Activated CD4-positive, alpha-beta memory T cell treated with anti-CD3 and anti-CD28 coated beads for 36 hours (primary cell): ENCODE measurements at regions of chr2 and their contacts with region 1.

Region 1: GRCh38 chr2:69643602-69644505 is at the start of gene AAK1:
- DNase-seq: peak; percentile 91
- H3K4me3 Mint-ChIP-seq: peak within 1 kb of the TSS; percentile 86
- H3K27ac Mint-ChIP-seq: peak within 1 kb of the TSS; percentile 99
- H3K4me1 Mint-ChIP-seq: peaks cover 52% of the 10 kb centered on the region
- H3K27me3 Mint-ChIP-seq: no peaks in the 10 kb centered on the region
- total RNA-seq, gene AAK1: 95.2 to 99.3 TPM

Region 2: GRCh38 chr2:69436938-69437750 is 206.7 kb before region 1 on chr2 and contains the start of gene NFU1:
- CTCF ChIA-PET with region 1: no interaction called
- POLR2A ChIA-PET with region 1: interaction called, 11 read pairs
- intact Hi-C with region 1: loop called (anchors 1 kb)
- DNase-seq: peak; percentile 94
- H3K4me3 Mint-ChIP-seq: peak within 1 kb of the TSS; percentile 95
- H3K27ac Mint-ChIP-seq: peak within 1 kb of the TSS; percentile 91
- H3K4me1 Mint-ChIP-seq: peaks cover 24% of the 10 kb centered on the region
- H3K27me3 Mint-ChIP-seq: no peaks in the 10 kb centered on the region
- total RNA-seq, gene NFU1: 37.8 to 44.5 TPM

Region 3: DNA sequence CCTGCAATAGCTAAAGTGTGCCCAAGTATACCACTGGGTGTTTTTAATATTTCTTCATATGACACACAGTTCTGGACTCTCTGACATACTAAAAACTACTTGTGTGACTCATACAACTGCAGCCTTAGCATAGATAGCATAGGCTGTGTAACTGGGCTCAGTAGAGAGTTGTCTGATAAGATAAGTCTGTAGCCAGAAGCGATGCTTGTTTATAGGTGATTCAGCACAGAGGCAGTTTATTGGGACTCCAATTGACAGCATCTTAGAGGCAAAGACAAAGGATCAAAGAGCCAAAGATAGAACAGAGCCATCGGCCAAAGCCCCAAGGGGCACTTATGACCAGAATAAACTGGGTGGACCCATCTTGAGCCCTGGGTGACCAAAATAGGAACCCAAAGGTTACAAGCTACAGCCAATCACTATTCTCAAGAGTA is 42.7 kb before region 1 on chr2:
- CTCF ChIA-PET with region 1: interaction called, 3 read pairs
- POLR2A ChIA-PET with region 1: interaction called, 5 read pairs
- intact Hi-C with region 1: loop called (anchors 1 kb)
- DNase-seq: no peak
- H3K4me3 Mint-ChIP-seq: no peak overlapping the region
- H3K27ac Mint-ChIP-seq: peak overlapping the region; percentile 85
- H3K4me1 Mint-ChIP-seq: peaks cover 88% of the 10 kb centered on the region
- H3K27me3 Mint-ChIP-seq: no peaks in the 10 kb centered on the region

Region 4: DNA sequence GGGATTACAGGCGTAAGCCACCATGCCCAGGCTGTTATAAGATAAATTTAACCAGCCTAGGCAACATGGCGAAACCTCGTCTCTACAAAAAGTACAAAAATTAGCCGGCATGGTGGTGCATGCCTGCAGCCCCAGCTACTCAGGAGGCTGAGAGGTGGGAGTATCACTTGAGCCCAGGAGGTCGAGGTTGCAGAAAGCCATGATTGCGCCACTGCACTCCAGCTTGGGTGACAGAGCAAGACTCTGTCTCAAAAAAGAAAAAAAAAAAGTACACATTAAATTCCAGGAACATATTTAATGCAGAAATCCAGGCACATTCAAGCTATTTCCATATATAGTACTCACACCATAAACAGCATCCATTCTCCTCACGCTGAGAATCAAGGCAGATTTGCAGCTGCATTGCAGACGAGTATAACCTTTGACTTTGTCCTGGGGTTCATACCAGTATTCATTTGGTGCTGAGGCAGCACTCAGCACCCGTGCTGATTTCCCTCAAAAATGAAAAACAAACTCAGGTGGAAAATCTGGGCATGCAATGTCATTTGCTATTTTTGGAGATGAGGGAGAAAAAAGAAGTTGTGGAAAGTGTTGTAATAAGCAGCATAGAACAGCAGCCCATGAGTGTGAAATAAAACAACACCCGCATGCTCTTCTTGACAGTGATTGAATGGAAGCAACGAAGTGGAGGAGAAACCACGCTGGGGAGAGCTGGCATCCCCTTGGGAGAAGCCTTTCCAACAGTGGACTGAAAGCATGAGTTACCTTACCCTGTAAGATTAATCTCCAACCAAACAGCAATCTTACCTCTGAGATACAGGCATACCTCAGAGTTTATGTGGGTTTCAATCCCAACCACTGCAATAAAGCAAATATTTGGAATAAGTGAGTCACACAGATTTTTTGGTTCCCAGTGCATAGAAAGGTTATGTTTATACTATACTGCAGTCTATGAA is 51.3 kb after region 1 on chr2:
- CTCF ChIA-PET with region 1: no interaction called
- POLR2A ChIA-PET with region 1: interaction called, 3 read pairs
- intact Hi-C with region 1: loop called (anchors 1 kb)
- DNase-seq: no peak
- H3K4me3 Mint-ChIP-seq: no peak overlapping the region
- H3K27ac Mint-ChIP-seq: peak overlapping the region; percentile 47
- H3K4me1 Mint-ChIP-seq: peaks cover 78% of the 10 kb centered on the region
- H3K27me3 Mint-ChIP-seq: no peaks in the 10 kb centered on the region

Region 5: DNA sequence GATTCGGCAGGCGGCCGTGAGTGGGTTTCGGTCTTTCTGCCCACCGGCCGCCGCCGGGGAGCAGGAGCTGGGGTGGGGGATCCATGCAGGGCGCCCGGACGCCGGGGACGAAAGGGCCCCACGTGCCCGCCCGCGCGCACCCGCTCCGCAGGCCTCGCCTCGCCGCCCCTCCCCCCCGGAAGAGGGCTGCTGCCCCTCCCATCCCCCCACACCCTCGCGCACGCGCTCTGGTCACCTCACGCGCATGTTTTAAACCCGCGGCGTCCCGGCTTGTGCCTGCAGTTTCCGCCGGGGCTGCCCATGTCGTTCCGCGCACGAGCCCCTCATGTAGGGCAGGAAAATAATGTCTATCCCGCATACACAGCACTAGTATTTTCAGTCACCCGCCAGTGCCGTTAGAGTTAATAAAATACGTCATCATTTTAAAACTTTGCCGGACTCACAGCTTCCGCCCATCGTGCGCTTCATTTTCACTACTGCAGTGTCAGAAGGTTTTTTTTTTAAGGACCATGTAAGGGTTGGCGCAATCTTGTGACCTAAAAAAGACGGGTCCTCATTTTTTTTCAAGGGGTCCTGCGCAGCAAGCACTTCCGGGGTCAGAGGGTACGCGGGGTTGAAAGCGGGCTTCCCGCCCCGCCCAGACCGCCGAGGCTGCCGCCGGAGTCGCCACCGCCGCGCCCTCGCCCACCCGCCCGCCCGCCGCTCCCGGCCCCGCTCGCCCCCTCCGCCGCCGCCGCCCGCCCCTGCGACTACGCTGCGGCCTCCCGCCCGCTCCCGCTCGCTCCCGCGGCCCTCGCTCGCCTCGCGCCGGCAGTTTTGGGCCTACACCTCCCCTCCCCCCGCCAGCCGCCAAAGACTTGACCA is 443.2 kb after region 1 on chr2 and contains the start of gene PCBP1:
- CTCF ChIA-PET with region 1: no interaction called
- POLR2A ChIA-PET with region 1: no interaction called
- intact Hi-C with region 1: loop called (anchors 5 kb)
- DNase-seq: peak; percentile 96
- H3K4me3 Mint-ChIP-seq: peak within 1 kb of the TSS; percentile 97
- H3K27ac Mint-ChIP-seq: peak within 1 kb of the TSS; percentile 100
- H3K4me1 Mint-ChIP-seq: peaks cover 49% of the 10 kb centered on the region
- H3K27me3 Mint-ChIP-seq: peaks cover 3% of the 10 kb centered on the region
- total RNA-seq, gene PCBP1: 444 to 449 TPM

Region 6: DNA sequence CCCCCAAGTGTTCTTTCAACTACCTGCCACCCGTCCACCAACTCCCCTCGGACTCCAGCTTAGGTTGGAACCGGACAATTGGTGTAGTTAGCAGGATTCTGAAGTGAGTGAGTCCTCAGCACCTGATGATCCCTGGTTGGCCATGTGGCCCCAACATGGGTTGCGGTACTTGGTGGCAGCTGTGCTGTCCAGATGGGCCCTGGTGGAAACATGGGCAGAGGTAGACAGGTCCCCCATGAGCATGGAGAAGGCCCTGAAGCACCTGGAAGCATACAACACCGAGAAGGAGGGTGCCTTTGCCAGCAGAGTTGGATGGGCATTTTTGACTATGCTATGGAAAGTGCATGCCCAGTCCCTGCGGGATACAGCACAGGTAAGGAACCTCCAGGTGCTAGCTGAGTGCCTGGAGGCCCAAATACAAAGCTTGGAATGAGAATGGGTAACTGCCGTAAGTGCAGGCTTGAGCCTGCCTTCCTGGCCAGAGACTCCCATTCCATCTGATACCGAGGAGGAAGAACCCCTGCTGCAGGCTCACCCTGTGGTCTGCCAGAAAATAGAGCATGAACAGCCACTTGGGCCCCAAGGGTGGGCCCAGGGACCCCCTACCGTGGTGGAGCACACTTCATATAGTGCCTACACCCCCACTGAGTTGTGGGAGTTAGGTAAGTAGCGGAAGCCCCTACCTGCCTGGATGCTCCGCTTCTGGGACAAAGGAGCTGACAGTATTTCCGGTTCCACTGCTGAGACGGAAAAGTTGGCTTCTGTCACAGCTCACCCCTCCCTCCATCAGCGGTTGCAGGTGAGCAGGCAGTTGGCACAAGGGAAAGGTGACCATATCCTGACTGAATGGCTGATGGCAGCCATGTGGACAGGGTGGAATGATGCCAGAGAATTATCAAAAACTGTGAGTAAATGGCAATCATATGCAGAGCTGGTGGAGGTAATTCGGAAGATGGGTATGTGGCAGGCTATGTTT is 558.3 kb after region 1 on chr2:
- CTCF ChIA-PET with region 1: no interaction called
- POLR2A ChIA-PET with region 1: no interaction called
- intact Hi-C with region 1: no loop called
- DNase-seq: no peak
- H3K4me3 Mint-ChIP-seq: no peak overlapping the region
- H3K27ac Mint-ChIP-seq: no peak overlapping the region
- H3K4me1 Mint-ChIP-seq: no peaks in the 10 kb centered on the region
- H3K27me3 Mint-ChIP-seq: no peaks in the 10 kb centered on the region

Region 7: DNA sequence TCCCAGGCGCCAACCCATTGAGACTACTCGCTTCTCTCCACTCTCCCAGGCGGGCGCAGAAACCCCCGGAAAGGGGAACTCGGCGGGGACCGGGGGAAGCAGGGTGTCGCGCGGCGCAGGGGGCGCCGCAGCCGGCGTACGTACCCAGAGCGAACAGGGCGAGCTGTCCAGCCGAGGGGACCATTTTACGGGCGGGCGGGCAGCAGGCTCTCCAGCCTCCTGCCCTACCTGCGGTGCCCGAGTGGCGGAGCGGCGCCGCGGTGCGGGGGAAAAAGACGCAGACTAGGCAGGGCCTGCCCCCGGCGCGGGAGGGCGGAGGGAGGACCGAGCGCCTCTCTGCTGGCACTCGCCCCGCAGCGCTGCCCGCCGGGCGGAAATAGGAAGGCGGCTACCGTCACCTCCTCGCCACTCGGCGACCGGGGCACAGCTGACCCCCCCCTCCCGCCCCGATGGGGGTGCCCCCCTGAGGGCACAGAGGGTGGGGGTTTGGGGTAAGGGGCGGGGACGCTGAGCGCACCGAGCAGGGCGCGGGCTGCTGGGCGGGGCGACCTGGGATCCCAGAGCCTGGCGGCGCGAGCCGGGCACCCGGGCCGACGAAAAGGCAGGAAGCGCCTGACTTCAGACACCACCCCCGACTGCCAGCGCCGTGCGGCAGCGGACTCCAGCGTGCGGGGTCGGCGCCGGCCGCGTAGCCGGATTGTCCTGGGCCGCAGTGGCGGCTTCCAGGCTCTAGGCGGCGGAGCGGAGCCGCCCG is 909.9 kb after region 1 on chr2 and contains the start of gene TGFA:
- CTCF ChIA-PET with region 1: no interaction called
- POLR2A ChIA-PET with region 1: no interaction called
- intact Hi-C with region 1: no loop called
- DNase-seq: peak; percentile 77
- H3K4me3 Mint-ChIP-seq: peak within 1 kb of the TSS; percentile 75
- H3K27ac Mint-ChIP-seq: no peak within 1 kb of the TSS
- H3K4me1 Mint-ChIP-seq: peaks cover 20% of the 10 kb centered on the region
- H3K27me3 Mint-ChIP-seq: peaks cover 17% of the 10 kb centered on the region
- total RNA-seq, gene TGFA: 0.50 to 0.58 TPM